ENCODE measurements at regions of chr11 and their contacts with region 1.

Region 1: DNA sequence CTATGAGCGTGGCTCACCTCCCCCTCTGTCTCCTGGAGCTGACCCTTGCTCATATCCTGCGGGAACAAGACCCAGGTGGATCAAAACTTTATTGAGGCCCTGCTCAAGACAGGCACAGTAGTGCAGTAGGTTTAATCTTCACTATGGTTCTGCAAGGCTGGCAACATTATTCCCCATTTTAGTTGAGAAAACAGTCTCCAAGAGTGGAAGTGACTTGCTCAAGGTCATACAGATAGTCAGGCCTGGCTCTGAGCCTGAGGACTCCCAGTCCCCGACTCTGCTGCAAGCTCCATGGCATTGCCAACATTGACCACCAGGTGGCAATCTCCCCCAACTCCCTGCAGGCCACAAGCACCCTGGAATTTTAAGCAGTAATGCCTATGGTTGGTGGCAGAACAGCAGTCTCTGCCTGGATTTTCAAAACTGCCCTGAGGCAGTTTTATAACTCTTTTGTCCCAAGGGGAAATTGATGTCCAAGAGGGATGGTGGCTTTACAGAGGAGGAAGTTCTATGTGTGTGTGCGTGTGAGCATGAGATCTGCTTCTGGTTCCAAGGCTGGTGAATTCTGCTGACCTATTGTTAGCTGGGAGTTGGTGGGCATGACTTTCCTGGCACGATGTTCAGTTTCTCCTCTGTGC is 34.1 kb downstream of the NEU3 start:
- DNase-seq: peak; percentile 83 to 89 (median 86)
- H3K4me3 ChIP-seq: no peak overlapping the region
- H3K27ac ChIP-seq: peak overlapping the region; percentile 68 to 69
- H3K4me1 ChIP-seq: peaks cover 0 to 22% (median 15%) of the 10 kb centered on the region in 3 donors
- H3K27me3 ChIP-seq: no peaks in the 10 kb centered on the region
- CTCF ChIP-seq: peak; percentile 93

Region 2: GRCh38 chr11:74581954-74582547 is 440.8 kb before region 1 on chr11:
- intact Hi-C with region 1: no loop called
- DNase-seq: no peak
- H3K4me3 ChIP-seq: no peak overlapping the region
- H3K27ac ChIP-seq: no peak overlapping the region
- H3K4me1 ChIP-seq: no peaks in the 10 kb centered on the region
- H3K27me3 ChIP-seq: no peaks in the 10 kb centered on the region
- CTCF ChIP-seq: no peak

Region 3: GRCh38 chr11:75105462-75105925 is 82.6 kb after region 1 on chr11:
- intact Hi-C with region 1: no loop called
- DNase-seq: no peak
- H3K4me3 ChIP-seq: no peak overlapping the region
- H3K27ac ChIP-seq: no peak overlapping the region
- H3K4me1 ChIP-seq: no peaks in the 10 kb centered on the region
- H3K27me3 ChIP-seq: no peaks in the 10 kb centered on the region
- CTCF ChIP-seq: no peak

Region 4: GRCh38 chr11:75241036-75241905 is 218.4 kb after region 1 on chr11:
- intact Hi-C with region 1: loop called (anchors 10 kb)
- DNase-seq: peak; percentile 90 to 94 (median 92)
- H3K4me3 ChIP-seq: no peak overlapping the region
- H3K27ac ChIP-seq: no peak overlapping the region
- H3K4me1 ChIP-seq: peaks cover 0 to 10% (median 0%) of the 10 kb centered on the region in 3 donors
- H3K27me3 ChIP-seq: peaks cover 23% of the 10 kb centered on the region
- CTCF ChIP-seq: peak; percentile 99